ENCODE measurements at regions of chr12 and their contacts with region 1.

Region 1: GRCh38 chr12:28190321-28191050 is at the start of gene CCDC91:
- DNase-seq: peak; percentile 84
- H3K4me3 Mint-ChIP-seq: peak within 1 kb of the TSS; percentile 94
- H3K27ac Mint-ChIP-seq: peak within 1 kb of the TSS; percentile 98
- H3K4me1 Mint-ChIP-seq: peaks cover 15% of the 10 kb centered on the region
- H3K27me3 Mint-ChIP-seq: no peaks in the 10 kb centered on the region
- CTCF ChIP-seq: no peak
- total RNA-seq, gene CCDC91: 35.9 and 38.6 TPM in 2 replicates

Region 2: DNA sequence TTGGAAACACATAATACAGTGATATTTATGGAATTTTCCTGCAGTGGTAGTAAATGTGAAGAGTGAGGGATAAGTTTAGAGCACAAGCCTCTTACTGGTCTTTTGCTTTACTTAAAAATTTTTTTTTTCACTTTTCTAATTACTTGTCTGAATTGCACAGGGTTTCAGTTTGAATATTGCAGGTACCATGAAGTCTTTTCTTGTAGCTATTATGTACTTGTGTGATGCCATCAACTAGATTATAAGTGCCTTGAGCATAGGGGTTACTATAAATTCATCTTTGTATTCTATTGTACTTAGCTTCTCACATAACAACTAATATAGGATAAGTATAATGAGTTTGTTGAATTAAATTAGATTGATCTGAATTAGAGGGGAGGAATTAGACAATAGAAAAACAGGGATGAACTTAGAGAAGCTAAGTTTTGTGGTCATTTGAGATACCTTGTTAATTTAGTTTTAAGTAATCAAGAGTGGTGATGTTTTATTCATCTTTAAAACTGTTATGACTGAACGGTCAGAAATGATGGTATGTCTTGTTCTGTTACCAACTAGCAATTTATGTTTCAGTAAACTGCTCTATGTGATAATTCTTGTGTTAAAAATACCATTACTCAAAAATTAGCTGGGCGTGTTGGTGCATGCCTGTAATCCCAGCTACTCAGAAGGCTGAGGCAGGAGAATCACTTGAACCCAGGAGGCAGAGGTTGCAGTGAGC is 41.9 kb after region 1 on chr12:
- CTCF ChIA-PET with region 1: no interaction called
- POLR2A ChIA-PET with region 1: interaction called, 53 read pairs
- intact Hi-C with region 1: no loop called
- DNase-seq: no peak
- H3K4me3 Mint-ChIP-seq: no peak overlapping the region
- H3K27ac Mint-ChIP-seq: peak overlapping the region; percentile 80
- H3K4me1 Mint-ChIP-seq: peaks cover 18% of the 10 kb centered on the region
- H3K27me3 Mint-ChIP-seq: no peaks in the 10 kb centered on the region
- CTCF ChIP-seq: no peak

Region 3: GRCh38 chr12:28535216-28535615 is 344.7 kb after region 1 on chr12:
- CTCF ChIA-PET with region 1: no interaction called
- POLR2A ChIA-PET with region 1: interaction called, 6 read pairs
- intact Hi-C with region 1: loop called (anchors 5 kb)
- DNase-seq: peak; percentile 31
- H3K4me3 Mint-ChIP-seq: no peak overlapping the region
- H3K27ac Mint-ChIP-seq: no peak overlapping the region
- H3K4me1 Mint-ChIP-seq: peaks cover 7% of the 10 kb centered on the region
- H3K27me3 Mint-ChIP-seq: no peaks in the 10 kb centered on the region
- CTCF ChIP-seq: no peak

Region 4: GRCh38 chr12:28872654-28873268 is 682.3 kb after region 1 on chr12:
- CTCF ChIA-PET with region 1: interaction called, 6 read pairs
- POLR2A ChIA-PET with region 1: interaction called, 5 read pairs
- intact Hi-C with region 1: loop called (anchors 1 kb)
- DNase-seq: peak; percentile 69
- H3K4me3 Mint-ChIP-seq: no peak overlapping the region
- H3K27ac Mint-ChIP-seq: no peak overlapping the region
- H3K4me1 Mint-ChIP-seq: peaks cover 21% of the 10 kb centered on the region
- H3K27me3 Mint-ChIP-seq: no peaks in the 10 kb centered on the region
- CTCF ChIP-seq: peak; percentile 77